T-cell (primary cell): ENCODE measurements at regions of chrX and their contacts with region 1.

Region 1: GRCh38 chrX:98412058-98412457 is 1528.3 kb downstream of the RPA4 start:
- DNase-seq: no peak
- ATAC-seq: no peak
- H3K4me3 ChIP-seq: no peak overlapping the region
- H3K4me3 Mint-ChIP-seq: no peak overlapping the region
- H3K27ac ChIP-seq: no peak overlapping the region
- H3K27ac Mint-ChIP-seq: no peak overlapping the region
- H3K4me1 ChIP-seq: no peaks in the 10 kb centered on the region
- H3K4me1 Mint-ChIP-seq: no peaks in the 10 kb centered on the region
- H3K27me3 ChIP-seq: no peaks in the 10 kb centered on the region
- H3K27me3 Mint-ChIP-seq: no peaks in the 10 kb centered on the region

Region 2: GRCh38 chrX:98263135-98263534 is 148.9 kb before region 1 on chrX:
- CTCF ChIA-PET with region 1: interaction called in 1 of 2 experiments, 10 read pairs
- POLR2A ChIA-PET with region 1: no interaction called
- DNase-seq: no peak
- ATAC-seq: no peak
- H3K4me3 ChIP-seq: no peak overlapping the region
- H3K4me3 Mint-ChIP-seq: no peak overlapping the region
- H3K27ac ChIP-seq: no peak overlapping the region
- H3K27ac Mint-ChIP-seq: no peak overlapping the region
- H3K4me1 ChIP-seq: no peaks in the 10 kb centered on the region
- H3K4me1 Mint-ChIP-seq: no peaks in the 10 kb centered on the region
- H3K27me3 ChIP-seq: no peaks in the 10 kb centered on the region
- H3K27me3 Mint-ChIP-seq: peaks cover 0 to 6% of the 10 kb centered on the region in 2 donors